MCF 10A (cell line): ENCODE measurements at regions of chr5 and their contacts with region 1.

Region 1: GRCh38 chr5:132866342-132867045 is at the starts of genes GDF9 and UQCRQ:
- DNase-seq: peak; percentile 100
- H3K4me3 Mint-ChIP-seq: peak within 1 kb of the TSS; percentile 93
- H3K27ac Mint-ChIP-seq: peak within 1 kb of the TSS; percentile 96
- H3K4me1 Mint-ChIP-seq: peaks cover 17% of the 10 kb centered on the region
- H3K27me3 Mint-ChIP-seq: no peaks in the 10 kb centered on the region
- CTCF ChIP-seq: peak; percentile 32
- total RNA-seq, gene GDF9: 0.51 and 0.79 TPM in 2 replicates
- total RNA-seq, gene UQCRQ: 974 and 1,181 TPM in 2 replicates

Region 2: GRCh38 chr5:132736853-132737833 is 129.4 kb before region 1 on chr5 and contains the start of gene KIF3A:
- CTCF ChIA-PET with region 1: interaction called, 3 read pairs
- POLR2A ChIA-PET with region 1: interaction called, 12 read pairs
- intact Hi-C with region 1: no loop called
- DNase-seq: peak; percentile 100
- H3K4me3 Mint-ChIP-seq: peak within 1 kb of the TSS; percentile 89
- H3K27ac Mint-ChIP-seq: peak within 1 kb of the TSS; percentile 29
- H3K4me1 Mint-ChIP-seq: peaks cover 38% of the 10 kb centered on the region
- H3K27me3 Mint-ChIP-seq: peaks cover 5% of the 10 kb centered on the region
- CTCF ChIP-seq: no peak
- total RNA-seq, gene KIF3A: 23.9 and 31.5 TPM in 2 replicates

Region 3: GRCh38 chr5:132829742-132830435 is 36.6 kb before region 1 on chr5:
- CTCF ChIA-PET with region 1: interaction called, 211 read pairs
- POLR2A ChIA-PET with region 1: interaction called, 176 read pairs
- intact Hi-C with region 1: loop called (anchors 1 kb)
- DNase-seq: peak; percentile 87
- H3K4me3 Mint-ChIP-seq: peak overlapping the region; percentile 90
- H3K27ac Mint-ChIP-seq: peak overlapping the region; percentile 90
- H3K4me1 Mint-ChIP-seq: peaks cover 21% of the 10 kb centered on the region
- H3K27me3 Mint-ChIP-seq: no peaks in the 10 kb centered on the region
- CTCF ChIP-seq: peak; percentile 98

Region 4: DNA sequence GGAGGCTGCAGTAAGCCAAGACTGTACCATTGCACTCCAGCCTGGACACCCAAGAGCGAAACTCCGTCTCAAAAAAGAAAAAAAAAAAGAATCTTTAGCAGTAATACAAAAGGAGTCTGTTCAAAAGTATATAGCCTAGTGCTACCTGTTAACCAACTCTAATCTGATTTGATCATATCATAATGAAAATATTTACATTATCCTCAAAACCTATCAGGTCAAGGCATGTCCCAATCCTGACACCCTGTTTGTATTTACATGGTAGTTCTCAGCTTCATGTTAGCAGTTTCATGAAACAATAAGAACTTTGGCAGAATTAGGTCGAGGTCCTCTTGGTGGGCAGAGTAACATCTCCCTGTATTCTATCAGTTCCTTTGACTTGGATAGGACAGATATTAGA is 21.6 kb before region 1 on chr5:
- CTCF ChIA-PET with region 1: interaction called, 29 read pairs
- POLR2A ChIA-PET with region 1: interaction called, 63 read pairs
- intact Hi-C with region 1: loop called (anchors 1 kb)
- DNase-seq: no peak
- H3K4me3 Mint-ChIP-seq: no peak overlapping the region
- H3K27ac Mint-ChIP-seq: no peak overlapping the region
- H3K4me1 Mint-ChIP-seq: peaks cover 16% of the 10 kb centered on the region
- H3K27me3 Mint-ChIP-seq: no peaks in the 10 kb centered on the region
- CTCF ChIP-seq: no peak

Region 5: GRCh38 chr5:132877938-132878337 is 11.4 kb after region 1 on chr5:
- CTCF ChIA-PET with region 1: interaction called, 35 read pairs
- POLR2A ChIA-PET with region 1: interaction called, 16 read pairs
- intact Hi-C with region 1: no loop called
- DNase-seq: peak; percentile 28
- H3K4me3 Mint-ChIP-seq: no peak overlapping the region
- H3K27ac Mint-ChIP-seq: no peak overlapping the region
- H3K4me1 Mint-ChIP-seq: peaks cover 3% of the 10 kb centered on the region
- H3K27me3 Mint-ChIP-seq: no peaks in the 10 kb centered on the region
- CTCF ChIP-seq: no peak

Region 6: DNA sequence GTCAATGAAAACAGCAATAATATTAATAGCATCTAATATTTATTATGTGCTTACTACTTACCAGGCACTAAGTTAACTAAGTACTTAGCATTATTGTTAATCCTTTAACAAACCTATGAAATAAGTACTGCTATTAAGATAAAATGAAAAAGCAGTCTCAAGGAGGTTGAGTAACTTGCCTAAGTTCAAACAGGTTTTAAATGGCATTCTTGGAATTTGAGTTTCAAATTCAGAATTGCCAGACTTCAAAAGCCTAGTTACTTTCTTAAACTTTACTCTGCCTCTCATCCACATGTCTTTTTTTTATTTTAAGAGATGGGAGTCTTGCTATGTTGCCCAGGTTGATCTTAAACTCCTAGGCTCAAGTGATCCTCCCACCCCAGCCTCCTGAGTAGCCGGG is 23.0 kb after region 1 on chr5:
- CTCF ChIA-PET with region 1: interaction called, 4 read pairs
- POLR2A ChIA-PET with region 1: interaction called, 13 read pairs
- intact Hi-C with region 1: no loop called
- DNase-seq: no peak
- H3K4me3 Mint-ChIP-seq: no peak overlapping the region
- H3K27ac Mint-ChIP-seq: no peak overlapping the region
- H3K4me1 Mint-ChIP-seq: no peaks in the 10 kb centered on the region
- H3K27me3 Mint-ChIP-seq: no peaks in the 10 kb centered on the region
- CTCF ChIP-seq: no peak

Region 7: DNA sequence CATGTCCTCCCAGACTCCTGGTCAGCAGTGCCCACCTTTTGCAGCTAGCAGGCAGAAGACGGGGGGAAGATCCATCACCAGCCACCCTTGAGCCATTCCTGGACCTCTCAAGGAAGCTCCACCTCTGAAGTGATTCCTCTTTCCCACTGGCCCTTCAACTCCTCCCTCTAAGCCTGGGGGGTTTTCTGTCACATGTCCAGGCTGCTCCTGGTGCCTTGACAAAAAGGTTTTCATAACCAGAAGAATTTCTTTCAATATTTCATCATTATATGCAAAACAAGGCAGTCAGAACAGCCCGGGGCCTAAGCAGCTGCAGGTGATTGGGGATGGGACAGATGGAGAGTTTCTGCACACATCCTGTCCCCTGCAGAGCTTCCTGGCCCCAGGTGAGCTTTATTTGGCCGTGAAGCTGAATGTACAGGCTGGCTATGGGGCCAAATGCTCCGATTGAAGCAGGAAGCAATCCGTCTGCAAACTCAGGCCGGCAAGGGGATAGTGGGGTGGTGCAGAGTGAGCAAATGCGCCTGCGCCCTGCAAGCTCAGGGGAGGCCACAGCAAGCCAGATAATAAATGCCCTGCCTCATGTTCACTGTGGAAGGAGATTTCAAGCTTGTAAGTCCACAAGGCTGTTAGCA is 928.4 kb after region 1 on chr5:
- CTCF ChIA-PET with region 1: no interaction called
- POLR2A ChIA-PET with region 1: no interaction called
- intact Hi-C with region 1: no loop called
- DNase-seq: no peak
- H3K4me3 Mint-ChIP-seq: no peak overlapping the region
- H3K27ac Mint-ChIP-seq: no peak overlapping the region
- H3K4me1 Mint-ChIP-seq: no peaks in the 10 kb centered on the region
- H3K27me3 Mint-ChIP-seq: peaks cover 63% of the 10 kb centered on the region
- CTCF ChIP-seq: no peak